G401 (cell line): ENCODE measurements at regions of chr12 and their contacts with region 1.

Region 1: GRCh38 chr12:120228291-120229070 is 27.6 kb upstream of the RPLP0 start:
- DNase-seq: peak; percentile 89

Region 2: DNA sequence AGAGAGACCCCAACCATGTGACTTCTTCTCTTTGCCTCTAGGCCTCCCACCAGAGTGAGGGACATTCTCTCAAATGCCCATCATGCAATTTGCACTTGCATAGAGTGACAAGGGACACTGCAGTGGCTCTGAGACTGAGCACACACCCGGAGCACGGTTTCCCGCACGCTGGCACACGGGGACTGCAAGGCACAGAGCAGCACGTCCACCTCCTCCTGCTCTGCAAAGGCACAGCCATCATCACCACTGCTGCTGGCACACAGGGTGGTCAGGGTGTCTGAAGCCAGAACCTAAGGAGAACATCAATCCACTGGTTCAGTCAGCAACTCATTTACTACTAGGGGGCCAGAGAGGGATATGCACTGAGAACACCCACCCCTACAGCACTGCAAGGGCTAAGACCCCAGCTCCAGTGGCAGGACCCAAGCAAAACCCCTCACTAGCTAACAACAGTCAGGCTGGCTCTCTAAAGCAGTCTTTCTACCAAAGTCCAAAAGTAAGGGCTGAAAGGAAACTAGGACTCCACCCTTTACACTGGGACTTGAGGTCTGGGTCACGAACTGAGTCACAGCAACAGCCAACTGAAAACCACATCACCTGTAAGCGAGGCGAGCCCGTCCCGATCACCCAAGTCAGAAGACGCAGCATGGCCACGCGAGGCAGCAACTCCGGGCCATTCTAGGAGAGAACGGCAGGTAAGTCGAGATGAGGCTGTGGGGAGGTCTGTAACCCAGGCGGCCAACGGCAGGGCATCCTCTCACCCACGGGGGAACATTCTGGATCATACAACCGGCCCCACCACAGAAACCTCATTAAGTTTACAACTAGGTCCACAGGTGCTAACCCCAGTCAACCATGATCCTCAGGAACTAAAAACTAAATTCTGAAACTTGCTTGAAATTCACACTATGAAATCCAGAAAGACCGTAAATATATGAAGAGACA is 71.9 kb before region 1 on chr12:
- in situ Hi-C with region 1: no loop called
- DNase-seq: no peak

Region 3: DNA sequence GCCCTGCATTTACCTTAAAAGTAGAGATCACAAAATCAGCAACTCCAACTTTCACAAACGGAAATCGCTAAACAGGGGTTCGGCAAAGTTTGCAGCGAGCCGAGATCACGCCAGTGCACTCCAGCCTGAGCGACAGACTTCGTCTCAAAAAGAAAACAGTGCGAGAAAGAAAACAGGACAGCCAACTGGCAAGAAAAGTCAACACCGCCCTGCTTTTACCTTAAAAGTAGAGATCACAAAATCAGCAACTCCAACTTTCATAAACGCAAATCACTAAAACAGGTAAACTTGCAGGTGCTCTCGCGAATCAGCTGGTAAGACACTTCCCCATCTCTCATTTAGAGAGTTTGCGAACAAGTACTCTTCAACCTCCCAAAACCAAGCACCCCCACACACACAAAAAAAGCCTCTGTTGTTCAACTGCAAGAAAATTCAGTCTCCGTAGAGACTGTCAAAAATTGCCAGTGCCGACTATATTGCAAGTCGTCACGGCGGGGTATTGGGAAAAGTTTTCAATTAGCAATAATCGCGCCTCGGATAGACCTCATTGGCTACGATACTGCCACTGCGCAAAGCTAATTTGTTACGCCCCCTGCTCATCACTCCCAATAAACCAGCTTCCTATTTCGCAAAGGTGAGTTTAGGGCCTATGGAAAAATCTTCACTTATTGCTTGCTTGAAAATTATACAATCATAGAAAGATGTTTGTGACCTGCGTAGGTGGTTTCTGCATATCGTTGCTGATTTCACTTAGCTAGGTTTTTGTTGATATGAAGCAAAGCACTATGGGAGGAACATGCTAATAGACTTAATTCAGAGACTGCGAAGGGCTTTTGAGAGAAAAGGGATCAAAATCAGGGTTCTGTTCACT is 64.4 kb after region 1 on chr12 and contains the start of gene RNU4-1:
- in situ Hi-C with region 1: no loop called
- DNase-seq: peak; percentile 91
- total RNA-seq, gene RNU4-1: not detected in 2 replicates

Region 4: GRCh38 chr12:120445911-120446843 is 217.7 kb after region 1 on chr12 and contains the starts of genes GATC and TRIAP1:
- in situ Hi-C with region 1: loop called (anchors 10 kb)
- DNase-seq: peak; percentile 83
- total RNA-seq, gene GATC: 34.3 and 42.3 TPM in 2 replicates
- total RNA-seq, gene TRIAP1: 90.3 and 118 TPM in 2 replicates